Endothelial cell of umbilical vein (primary cell): ENCODE measurements at regions of chr4 and their contacts with region 1.

Region 1: GRCh38 chr4:168585168-168586091 is 88.6 kb downstream of the PALLD start:
- DNase-seq: peak; percentile 78
- H3K4me3 ChIP-seq: no peak overlapping the region
- H3K27ac ChIP-seq: no peak overlapping the region
- H3K4me1 ChIP-seq: peaks cover 14% of the 10 kb centered on the region
- H3K27me3 ChIP-seq: no peaks in the 10 kb centered on the region
- CTCF ChIP-seq: peak; percentile 58 to 80
- POLR2A ChIP-seq: no peak

Region 2: GRCh38 chr4:168574581-168575295 is 10.7 kb before region 1 on chr4:
- CTCF ChIA-PET with region 1: interaction called, 12 read pairs
- POLR2A ChIA-PET with region 1: no interaction called
- dilution Hi-C with region 1: no loop called
- intact Hi-C with region 1: no loop called
- DNase-seq: peak; percentile 28
- H3K4me3 ChIP-seq: no peak overlapping the region
- H3K27ac ChIP-seq: no peak overlapping the region
- H3K4me1 ChIP-seq: peaks cover 5% of the 10 kb centered on the region
- H3K27me3 ChIP-seq: no peaks in the 10 kb centered on the region
- CTCF ChIP-seq: no peak
- POLR2A ChIP-seq: no peak

Region 3: DNA sequence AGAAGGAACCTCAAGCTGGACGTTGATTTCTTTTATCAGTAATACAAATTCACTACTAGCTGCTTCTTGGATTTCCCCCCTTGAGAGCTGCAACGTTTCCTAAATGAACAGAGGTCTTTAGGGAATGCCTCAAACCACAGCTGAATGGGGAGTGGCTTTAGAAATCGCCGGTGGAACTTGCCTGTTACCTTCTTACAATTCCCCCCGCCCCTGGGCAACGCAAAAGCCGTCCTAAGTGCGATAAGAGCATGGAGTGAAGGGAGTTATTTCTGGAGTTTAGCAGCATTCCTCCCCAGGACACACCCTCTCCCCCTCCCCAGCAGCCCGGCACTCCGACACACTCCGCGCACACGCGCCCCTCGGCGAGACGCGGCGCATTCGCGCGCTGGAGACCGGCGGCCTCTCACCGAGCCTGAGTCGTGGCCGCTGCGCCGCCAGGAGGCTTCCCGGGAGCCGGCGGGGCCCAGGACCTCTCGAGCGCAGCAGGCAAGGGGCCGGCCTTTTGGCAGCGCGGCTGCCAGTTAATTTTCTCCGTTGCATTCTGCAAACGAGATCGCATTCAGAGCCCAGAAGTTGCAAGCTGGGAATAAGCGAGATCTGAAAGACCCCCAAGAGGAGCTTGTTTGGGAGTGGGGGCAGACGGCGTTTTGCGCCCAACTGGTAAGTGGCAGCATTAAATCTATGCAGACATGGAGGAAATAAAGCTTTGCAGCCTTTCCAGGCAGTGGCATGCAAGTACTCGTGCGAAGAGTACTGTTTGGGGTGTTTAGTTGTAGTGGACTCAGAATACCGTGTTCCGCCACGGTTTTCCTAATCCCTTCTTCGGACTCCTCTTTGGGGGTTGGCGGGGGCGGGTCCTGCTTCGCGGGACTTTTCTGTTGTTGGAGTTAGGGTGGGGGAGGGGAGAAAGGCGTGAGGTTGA is 46.1 kb after region 1 on chr4:
- CTCF ChIA-PET with region 1: interaction called, 23 read pairs
- POLR2A ChIA-PET with region 1: no interaction called
- dilution Hi-C with region 1: no loop called
- intact Hi-C with region 1: loop called (anchors 2 kb)
- DNase-seq: peak; percentile 72
- H3K4me3 ChIP-seq: peak overlapping the region; percentile 38 to 77 (median 51)
- H3K27ac ChIP-seq: peak overlapping the region; percentile 42
- H3K4me1 ChIP-seq: peaks cover 27% of the 10 kb centered on the region
- H3K27me3 ChIP-seq: no peaks in the 10 kb centered on the region
- CTCF ChIP-seq: peak; percentile 28 to 59
- POLR2A ChIP-seq: no peak

Region 4: DNA sequence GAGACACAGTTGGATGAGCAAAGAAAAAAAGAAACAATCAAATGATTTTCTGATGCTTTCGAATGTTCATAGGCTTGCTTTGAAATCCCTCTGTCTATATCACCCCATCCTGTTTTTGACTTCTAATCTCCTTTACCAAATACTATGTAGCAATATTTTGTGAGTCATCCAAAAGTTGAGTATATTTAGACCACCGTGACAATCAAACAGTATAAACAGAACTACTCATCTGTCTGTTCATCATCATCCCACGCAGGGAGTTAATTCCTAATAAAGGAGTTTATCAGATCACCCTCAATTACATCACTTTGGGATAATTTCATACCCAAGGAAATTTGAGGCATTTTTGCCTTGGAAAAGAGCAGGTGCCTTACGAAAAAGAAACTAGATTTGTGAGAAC is 211.7 kb after region 1 on chr4:
- CTCF ChIA-PET with region 1: no interaction called
- POLR2A ChIA-PET with region 1: no interaction called
- dilution Hi-C with region 1: no loop called
- intact Hi-C with region 1: loop called (anchors 5 kb)
- DNase-seq: peak; percentile 72
- H3K4me3 ChIP-seq: no peak overlapping the region
- H3K27ac ChIP-seq: peak overlapping the region; percentile 47
- H3K4me1 ChIP-seq: peaks cover 22% of the 10 kb centered on the region
- H3K27me3 ChIP-seq: no peaks in the 10 kb centered on the region
- CTCF ChIP-seq: no peak
- POLR2A ChIP-seq: no peak

Region 5: DNA sequence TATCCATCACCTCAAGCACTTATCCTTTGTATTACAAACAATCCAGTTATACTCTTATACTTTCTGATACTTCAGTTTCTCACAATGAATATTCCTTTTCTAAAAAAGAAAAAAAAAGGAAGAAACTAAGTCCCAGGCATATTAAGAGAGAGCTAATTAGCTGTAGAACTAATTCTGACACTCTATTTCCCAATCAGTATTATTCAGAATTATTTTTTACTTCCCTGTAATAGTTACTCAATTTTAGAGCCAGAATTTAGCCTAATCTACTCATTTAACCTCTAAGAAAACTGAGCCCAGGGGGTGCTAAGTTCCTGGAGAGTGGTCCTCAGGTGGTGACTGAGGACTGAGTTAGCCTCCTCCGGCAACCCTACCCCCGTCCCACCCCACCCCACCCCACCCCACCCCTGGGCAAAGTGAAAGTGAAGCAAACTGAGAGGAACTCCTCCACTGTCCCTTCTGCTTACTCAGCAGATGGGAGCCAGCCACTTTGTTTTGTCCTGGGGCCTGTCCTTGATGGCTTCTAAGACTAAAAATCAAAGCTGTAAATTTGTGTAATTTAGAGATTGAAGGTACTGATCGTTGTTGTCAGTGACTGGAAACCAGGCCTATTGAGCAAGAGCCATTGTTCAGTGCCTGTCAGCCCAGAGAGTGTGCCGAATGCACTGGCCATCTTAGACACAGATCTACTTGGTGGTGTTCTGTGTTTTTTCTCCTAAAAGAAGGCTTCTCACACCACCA is 262.5 kb after region 1 on chr4:
- CTCF ChIA-PET with region 1: interaction called, 13 read pairs
- POLR2A ChIA-PET with region 1: no interaction called
- dilution Hi-C with region 1: no loop called
- intact Hi-C with region 1: no loop called
- DNase-seq: peak; percentile 37
- H3K4me3 ChIP-seq: peak overlapping the region in 1 of 3 experiments; percentile 9
- H3K27ac ChIP-seq: peak overlapping the region; percentile 21
- H3K4me1 ChIP-seq: peaks cover 16% of the 10 kb centered on the region
- H3K27me3 ChIP-seq: no peaks in the 10 kb centered on the region
- CTCF ChIP-seq: no peak
- POLR2A ChIP-seq: no peak

Region 6: GRCh38 chr4:168923526-168924194 is 338.2 kb after region 1 on chr4:
- CTCF ChIA-PET with region 1: interaction called, 58 read pairs
- POLR2A ChIA-PET with region 1: interaction called, 3 read pairs
- dilution Hi-C with region 1: loop called (anchors 25 kb)
- intact Hi-C with region 1: no loop called
- DNase-seq: peak; percentile 67
- H3K4me3 ChIP-seq: no peak overlapping the region
- H3K27ac ChIP-seq: no peak overlapping the region
- H3K4me1 ChIP-seq: no peaks in the 10 kb centered on the region
- H3K27me3 ChIP-seq: no peaks in the 10 kb centered on the region
- CTCF ChIP-seq: peak; percentile 57 to 66
- POLR2A ChIP-seq: no peak